Common myeloid progenitor, CD34-positive (primary cell): ENCODE measurements at regions of chr1 and their contacts with region 1.

Region 1: GRCh38 chr1:152001391-152002249 is 8.0 kb upstream of the S100A10 start:
- DNase-seq: peak; percentile 78 to 87 (median 79)
- H3K4me3 ChIP-seq: no peak overlapping the region
- H3K27ac ChIP-seq: no peak overlapping the region
- H3K4me1 ChIP-seq: no peaks in the 10 kb centered on the region
- H3K27me3 ChIP-seq: peaks cover 0 to 17% (median 5%) of the 10 kb centered on the region in 5 experiments

Region 2: GRCh38 chr1:151639466-151639865 is 362.2 kb before region 1 on chr1:
- CTCF ChIA-PET with region 1: no interaction called
- POLR2A ChIA-PET with region 1: no interaction called
- DNase-seq: no peak
- H3K4me3 ChIP-seq: no peak overlapping the region
- H3K27ac ChIP-seq: no peak overlapping the region
- H3K4me1 ChIP-seq: peaks cover 0 to 3% (median 0%) of the 10 kb centered on the region in 4 experiments
- H3K27me3 ChIP-seq: no peaks in the 10 kb centered on the region

Region 3: DNA sequence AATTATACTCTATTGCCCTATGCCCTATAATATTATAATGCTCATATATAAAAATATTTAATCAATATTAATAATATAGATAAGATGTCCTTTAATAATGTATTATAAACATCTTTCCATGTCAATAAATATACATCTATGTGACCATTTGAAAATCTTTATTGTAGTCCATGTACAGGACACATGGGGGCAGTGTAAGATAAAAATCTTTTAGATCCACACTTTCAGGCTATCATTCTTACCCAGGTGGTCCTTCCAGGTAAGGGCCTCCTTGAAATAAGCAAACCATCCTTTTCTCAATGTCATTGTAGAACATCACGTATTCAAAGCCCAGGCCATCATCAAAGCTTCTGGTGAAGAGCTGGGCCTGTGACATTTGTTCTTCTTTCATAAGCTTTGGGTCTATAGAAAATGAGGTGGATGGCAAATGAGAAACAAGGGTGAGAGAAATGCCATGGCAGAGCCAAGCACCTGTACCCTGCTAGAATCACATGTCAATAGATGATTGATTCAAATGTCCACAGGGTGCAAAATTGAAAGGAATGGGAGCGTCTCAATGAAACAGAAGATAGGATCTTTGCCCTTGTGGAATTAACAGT is 112.5 kb before region 1 on chr1:
- CTCF ChIA-PET with region 1: interaction called, 64 read pairs
- POLR2A ChIA-PET with region 1: no interaction called
- DNase-seq: peak; percentile 26 to 46 (median 44)
- H3K4me3 ChIP-seq: no peak overlapping the region
- H3K27ac ChIP-seq: no peak overlapping the region
- H3K4me1 ChIP-seq: no peaks in the 10 kb centered on the region
- H3K27me3 ChIP-seq: no peaks in the 10 kb centered on the region

Region 4: GRCh38 chr1:151918819-151919610 is 82.6 kb before region 1 on chr1:
- CTCF ChIA-PET with region 1: interaction called, 19 read pairs
- POLR2A ChIA-PET with region 1: no interaction called
- DNase-seq: no peak
- H3K4me3 ChIP-seq: no peak overlapping the region
- H3K27ac ChIP-seq: no peak overlapping the region
- H3K4me1 ChIP-seq: peaks cover 3 to 21% (median 16%) of the 10 kb centered on the region in 4 experiments
- H3K27me3 ChIP-seq: no peaks in the 10 kb centered on the region

Region 5: DNA sequence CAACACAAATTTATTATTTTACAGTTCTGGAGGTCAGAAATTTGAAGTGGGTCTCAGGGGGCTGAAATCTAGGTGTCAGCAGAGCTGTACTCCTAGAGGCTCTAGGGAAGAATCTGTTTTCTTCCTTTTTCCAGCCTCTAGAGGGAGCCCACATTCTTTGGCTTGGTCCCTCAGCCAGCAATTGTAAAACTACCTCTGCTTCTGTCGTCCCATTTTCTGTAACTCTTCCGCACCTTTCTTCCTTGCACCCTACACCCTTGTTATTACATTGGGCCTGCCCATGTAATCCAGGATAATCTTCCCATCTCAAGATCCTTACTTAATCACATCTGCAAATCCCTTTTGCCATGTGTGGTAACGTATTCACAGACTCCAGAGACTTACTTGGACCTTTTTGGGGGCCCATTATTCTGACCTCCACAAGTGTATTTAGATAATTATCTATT is 67.5 kb before region 1 on chr1:
- CTCF ChIA-PET with region 1: interaction called, 183 read pairs
- POLR2A ChIA-PET with region 1: no interaction called
- DNase-seq: peak; percentile 69 to 81 (median 74)
- H3K4me3 ChIP-seq: peak overlapping the region in 1 of 7 experiments; percentile 42
- H3K27ac ChIP-seq: no peak overlapping the region
- H3K4me1 ChIP-seq: peaks cover 0 to 9% (median 3%) of the 10 kb centered on the region in 4 experiments
- H3K27me3 ChIP-seq: no peaks in the 10 kb centered on the region

Region 6: DNA sequence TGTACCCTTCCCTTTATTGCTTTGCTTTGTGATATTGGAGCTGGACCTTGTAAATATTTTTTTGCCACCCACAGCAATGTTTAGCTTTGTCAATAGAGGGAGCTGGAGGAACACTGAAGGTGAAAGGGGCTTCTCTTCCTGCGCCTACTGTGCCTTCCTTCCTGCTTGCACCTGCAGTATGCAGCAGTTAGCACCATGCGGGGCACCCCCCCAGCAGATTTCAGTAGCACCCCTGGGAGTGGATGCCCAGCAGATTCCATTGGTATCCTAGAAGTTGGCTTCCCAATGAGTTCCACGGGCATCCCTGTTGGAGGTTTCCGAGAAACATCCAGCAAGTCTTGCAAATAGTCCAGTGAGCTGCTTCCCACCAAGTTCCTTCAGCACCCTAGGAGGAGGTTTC is 33.6 kb before region 1 on chr1:
- CTCF ChIA-PET with region 1: interaction called, 162 read pairs
- POLR2A ChIA-PET with region 1: interaction called, 8 read pairs
- DNase-seq: peak; percentile 48 to 66 (median 55)
- H3K4me3 ChIP-seq: no peak overlapping the region
- H3K27ac ChIP-seq: no peak overlapping the region
- H3K4me1 ChIP-seq: peaks cover 0 to 25% (median 16%) of the 10 kb centered on the region in 4 experiments
- H3K27me3 ChIP-seq: peaks cover 0 to 2% (median 0%) of the 10 kb centered on the region in 5 experiments

Region 7: DNA sequence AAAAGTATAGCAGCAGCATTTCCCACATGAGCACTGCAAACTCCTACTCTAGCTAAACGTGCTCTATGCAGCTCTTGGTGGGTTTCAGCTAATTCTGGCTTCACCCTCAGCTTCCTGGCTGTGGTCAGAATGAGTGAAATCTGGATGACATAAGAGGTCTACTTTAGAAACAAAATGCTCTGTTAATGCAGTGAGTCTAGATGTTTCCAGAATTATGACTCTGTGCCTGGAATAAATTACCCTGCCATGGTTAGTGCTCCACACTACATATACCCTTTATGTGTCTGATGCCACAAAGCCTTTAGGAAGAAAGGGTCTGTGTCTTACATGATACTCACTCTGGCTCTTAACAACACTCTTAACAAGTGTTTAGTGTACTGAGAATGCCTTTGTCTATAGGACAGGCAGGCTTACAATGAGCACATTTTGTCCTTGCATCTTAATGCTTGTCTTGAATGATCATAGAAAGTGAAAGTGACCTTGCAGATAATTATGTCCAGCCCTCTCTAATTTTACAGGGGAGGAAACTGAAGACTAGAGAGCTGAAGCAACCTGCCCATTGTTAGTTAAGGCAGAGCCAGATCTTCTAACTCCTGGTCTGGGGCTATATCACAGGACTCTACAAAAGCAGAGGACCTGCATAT is 17.2 kb before region 1 on chr1:
- CTCF ChIA-PET with region 1: interaction called, 104 read pairs
- POLR2A ChIA-PET with region 1: no interaction called
- DNase-seq: peak; percentile 25 to 73 (median 68)
- H3K4me3 ChIP-seq: peak overlapping the region in 1 of 7 experiments; percentile 34
- H3K27ac ChIP-seq: no peak overlapping the region
- H3K4me1 ChIP-seq: peaks cover 5 to 25% (median 16%) of the 10 kb centered on the region in 4 experiments
- H3K27me3 ChIP-seq: peaks cover 0 to 20% (median 0%) of the 10 kb centered on the region in 5 experiments

Region 8: GRCh38 chr1:152029144-152029928 is 27.7 kb after region 1 on chr1:
- CTCF ChIA-PET with region 1: interaction called, 13 read pairs
- POLR2A ChIA-PET with region 1: no interaction called
- DNase-seq: no peak
- H3K4me3 ChIP-seq: no peak overlapping the region
- H3K27ac ChIP-seq: no peak overlapping the region
- H3K4me1 ChIP-seq: peaks cover 6 to 17% (median 9%) of the 10 kb centered on the region in 4 experiments
- H3K27me3 ChIP-seq: no peaks in the 10 kb centered on the region